ENCODE measurements at regions of chr17 and their contacts with region 1.

Region 1: GRCh38 chr17:48678141-48678971 is 44.0 kb downstream of the PRAC1 start:
- DNase-seq: peak; percentile 87
- H3K4me3 ChIP-seq: peak overlapping the region in 1 of 2 experiments; percentile 29; a peak in 1 of 4 replicates
- H3K27ac ChIP-seq: no peak overlapping the region
- H3K4me1 ChIP-seq: no peaks in the 10 kb centered on the region
- H3K27me3 ChIP-seq: peaks cover 96% of the 10 kb centered on the region
- CTCF ChIP-seq: peak; percentile 98
- EP300 ChIP-seq: no peak
- RAD21 ChIP-seq: peak; percentile 70

Region 2: GRCh38 chr17:48586355-48587258 is 91.7 kb before region 1 on chr17:
- CTCF ChIA-PET with region 1: no interaction called
- POLR2A ChIA-PET with region 1: no interaction called
- DNase-seq: no peak
- H3K4me3 ChIP-seq: no peak overlapping the region
- H3K27ac ChIP-seq: no peak overlapping the region
- H3K4me1 ChIP-seq: peaks cover 2 to 3% of the 10 kb centered on the region in 2 experiments; a peak in 1 of 4 replicates
- H3K27me3 ChIP-seq: peaks cover 100% of the 10 kb centered on the region
- CTCF ChIP-seq: no peak
- EP300 ChIP-seq: no peak
- RAD21 ChIP-seq: no peak

Region 3: DNA sequence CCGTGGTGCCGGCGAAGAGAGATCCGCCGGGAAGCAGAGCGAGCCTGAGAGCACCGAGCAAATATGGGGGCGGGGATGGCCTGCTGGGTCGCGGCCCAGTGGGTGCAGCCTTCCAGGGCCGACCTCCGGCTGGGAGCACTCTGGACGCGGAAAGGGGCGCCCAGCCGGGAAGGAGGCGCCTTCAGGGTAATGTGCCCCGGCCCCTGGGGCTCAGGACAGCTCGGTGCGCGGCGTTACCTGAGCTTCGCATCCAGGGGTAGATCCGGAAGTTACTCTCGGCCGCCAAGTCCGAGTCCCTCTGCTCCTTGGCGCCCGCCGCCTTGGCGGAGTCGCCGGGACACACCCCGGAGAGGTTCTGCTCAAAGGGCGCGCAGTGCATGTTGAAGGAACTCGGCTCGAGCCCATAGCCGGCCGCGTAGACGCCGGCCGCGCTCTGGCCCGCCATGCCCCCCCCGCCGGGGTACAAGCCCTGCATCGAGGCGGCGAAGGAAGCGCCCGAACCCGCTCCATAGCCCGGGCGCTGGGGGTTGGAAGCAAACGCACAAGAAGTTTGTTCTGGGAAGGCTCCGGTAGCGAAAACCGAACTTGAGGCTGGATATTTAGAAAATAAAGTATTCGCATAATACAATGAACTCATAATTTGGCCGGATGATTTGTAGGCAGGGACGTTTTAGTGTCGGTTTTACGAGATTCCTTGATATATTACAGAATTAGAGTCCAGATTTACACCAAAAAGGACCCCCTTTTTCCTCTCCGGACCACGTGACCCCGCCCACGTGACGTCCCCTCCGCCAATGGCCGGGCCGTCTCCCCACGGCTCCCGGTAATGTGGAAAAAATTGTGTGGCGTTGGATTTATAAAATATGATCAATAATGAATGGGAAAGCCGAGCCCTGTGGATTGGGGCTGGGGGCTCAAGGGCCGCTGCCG is 67.8 kb before region 1 on chr17 and contains the start of gene HOXB7:
- CTCF ChIA-PET with region 1: no interaction called
- POLR2A ChIA-PET with region 1: no interaction called
- DNase-seq: peak; percentile 79
- H3K4me3 ChIP-seq: peak within 1 kb of the TSS in 1 of 2 experiments; percentile 2; a peak in 1 of 4 replicates
- H3K27ac ChIP-seq: no peak within 1 kb of the TSS
- H3K4me1 ChIP-seq: no peaks in the 10 kb centered on the region; a peak in 1 of 4 replicates
- H3K27me3 ChIP-seq: peaks cover 99% of the 10 kb centered on the region
- CTCF ChIP-seq: no peak
- EP300 ChIP-seq: no peak
- RAD21 ChIP-seq: no peak
- polyA plus RNA-seq, gene HOXB7: not detected in 2 replicates

Region 4: GRCh38 chr17:48636177-48637018 is 42.0 kb before region 1 on chr17:
- CTCF ChIA-PET with region 1: interaction called, 16 read pairs
- POLR2A ChIA-PET with region 1: no interaction called
- DNase-seq: peak; percentile 91
- H3K4me3 ChIP-seq: peak overlapping the region in 1 of 2 experiments; percentile 21; a peak in 1 of 4 replicates
- H3K27ac ChIP-seq: no peak overlapping the region
- H3K4me1 ChIP-seq: no peaks in the 10 kb centered on the region
- H3K27me3 ChIP-seq: peaks cover 100% of the 10 kb centered on the region
- CTCF ChIP-seq: peak; percentile 69
- EP300 ChIP-seq: no peak
- RAD21 ChIP-seq: no peak

Region 5: DNA sequence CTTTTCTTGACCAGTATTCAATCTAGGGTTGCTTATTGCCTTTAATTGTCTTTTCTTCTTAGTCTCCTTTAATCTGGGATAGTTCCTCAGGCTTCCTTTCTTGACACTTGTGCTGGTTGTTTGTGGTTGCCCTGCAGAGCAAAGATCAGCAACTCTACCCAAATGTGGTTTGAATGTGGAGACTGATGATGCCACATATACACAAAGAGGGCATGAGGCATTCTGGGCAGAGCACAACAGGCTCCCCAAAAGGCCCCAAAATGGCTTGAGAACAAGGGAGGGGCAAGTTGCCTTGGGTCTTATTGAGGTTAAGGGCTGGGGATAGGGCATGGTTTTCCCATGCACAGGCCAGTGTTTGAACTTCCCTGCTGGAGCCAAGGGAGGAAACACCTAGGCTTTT is 22.4 kb before region 1 on chr17:
- CTCF ChIA-PET with region 1: interaction called, 12 read pairs
- POLR2A ChIA-PET with region 1: no interaction called
- DNase-seq: no peak
- H3K4me3 ChIP-seq: no peak overlapping the region
- H3K27ac ChIP-seq: no peak overlapping the region
- H3K4me1 ChIP-seq: no peaks in the 10 kb centered on the region
- H3K27me3 ChIP-seq: peaks cover 67% of the 10 kb centered on the region
- CTCF ChIP-seq: no peak
- EP300 ChIP-seq: no peak
- RAD21 ChIP-seq: no peak

Region 6: DNA sequence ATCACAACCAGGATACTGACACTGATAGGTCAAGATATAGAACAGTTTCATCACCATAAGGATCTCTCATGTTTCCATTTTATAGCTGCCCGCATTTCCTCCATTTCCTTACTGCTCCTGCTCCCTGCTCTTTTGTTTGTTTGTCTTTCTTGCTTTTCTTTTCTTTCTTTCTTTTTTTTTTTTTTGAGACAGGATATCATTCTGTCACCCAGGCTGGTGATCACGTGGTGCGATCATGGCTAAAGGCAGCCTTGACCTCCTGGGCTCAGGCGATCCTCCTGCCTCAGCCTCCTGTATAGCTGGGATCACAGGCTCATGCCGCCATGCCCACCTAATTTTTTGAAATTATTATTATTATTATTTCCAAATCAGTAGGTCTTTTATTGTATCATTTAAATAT is 12.3 kb after region 1 on chr17:
- CTCF ChIA-PET with region 1: interaction called, 23 read pairs
- POLR2A ChIA-PET with region 1: interaction called, 4 read pairs
- DNase-seq: no peak
- H3K4me3 ChIP-seq: no peak overlapping the region
- H3K27ac ChIP-seq: no peak overlapping the region
- H3K4me1 ChIP-seq: no peaks in the 10 kb centered on the region
- H3K27me3 ChIP-seq: peaks cover 64% of the 10 kb centered on the region
- CTCF ChIP-seq: no peak
- EP300 ChIP-seq: no peak
- RAD21 ChIP-seq: no peak

Region 7: GRCh38 chr17:48718761-48719641 is 40.6 kb after region 1 on chr17:
- CTCF ChIA-PET with region 1: interaction called, 31 read pairs
- POLR2A ChIA-PET with region 1: no interaction called
- DNase-seq: peak; percentile 38
- H3K4me3 ChIP-seq: no peak overlapping the region
- H3K27ac ChIP-seq: no peak overlapping the region
- H3K4me1 ChIP-seq: no peaks in the 10 kb centered on the region
- H3K27me3 ChIP-seq: peaks cover 94% of the 10 kb centered on the region
- CTCF ChIP-seq: no peak
- EP300 ChIP-seq: no peak
- RAD21 ChIP-seq: no peak

Region 8: GRCh38 chr17:48791128-48792032 is 113.0 kb after region 1 on chr17:
- CTCF ChIA-PET with region 1: interaction called, 17 read pairs
- POLR2A ChIA-PET with region 1: no interaction called
- DNase-seq: peak; percentile 53
- H3K4me3 ChIP-seq: no peak overlapping the region; a peak in 1 of 4 replicates
- H3K27ac ChIP-seq: no peak overlapping the region
- H3K4me1 ChIP-seq: peaks cover 0 to 3% of the 10 kb centered on the region in 2 experiments; a peak in 1 of 4 replicates
- H3K27me3 ChIP-seq: peaks cover 44% of the 10 kb centered on the region
- CTCF ChIP-seq: peak; percentile 96
- EP300 ChIP-seq: no peak
- RAD21 ChIP-seq: peak; percentile 59